ENCODE measurements at regions of chr1 and their contacts with region 1.

Region 1: GRCh38 chr1:21232044-21232443 is 55.3 kb upstream of the EIF4G3 start:
- DNase-seq: peak; percentile 74
- ATAC-seq: peak; percentile 70
- H3K4me3 ChIP-seq: no peak overlapping the region
- H3K27ac ChIP-seq: peak overlapping the region; percentile 59
- H3K4me1 ChIP-seq: peaks cover 39% of the 10 kb centered on the region
- H3K27me3 ChIP-seq: no peaks in the 10 kb centered on the region
- CTCF ChIP-seq: peak; percentile 88

Region 2: GRCh38 chr1:21255278-21255942 is 23.4 kb after region 1 on chr1:
- CTCF ChIA-PET with region 1: interaction called, 6 read pairs
- POLR2A ChIA-PET with region 1: no interaction called
- intact Hi-C with region 1: loop called (anchors 1 kb)
- DNase-seq: peak; percentile 92
- ATAC-seq: peak; percentile 60
- H3K4me3 ChIP-seq: no peak overlapping the region
- H3K27ac ChIP-seq: no peak overlapping the region
- H3K4me1 ChIP-seq: peaks cover 21% of the 10 kb centered on the region
- H3K27me3 ChIP-seq: no peaks in the 10 kb centered on the region
- CTCF ChIP-seq: peak; percentile 89

Region 3: DNA sequence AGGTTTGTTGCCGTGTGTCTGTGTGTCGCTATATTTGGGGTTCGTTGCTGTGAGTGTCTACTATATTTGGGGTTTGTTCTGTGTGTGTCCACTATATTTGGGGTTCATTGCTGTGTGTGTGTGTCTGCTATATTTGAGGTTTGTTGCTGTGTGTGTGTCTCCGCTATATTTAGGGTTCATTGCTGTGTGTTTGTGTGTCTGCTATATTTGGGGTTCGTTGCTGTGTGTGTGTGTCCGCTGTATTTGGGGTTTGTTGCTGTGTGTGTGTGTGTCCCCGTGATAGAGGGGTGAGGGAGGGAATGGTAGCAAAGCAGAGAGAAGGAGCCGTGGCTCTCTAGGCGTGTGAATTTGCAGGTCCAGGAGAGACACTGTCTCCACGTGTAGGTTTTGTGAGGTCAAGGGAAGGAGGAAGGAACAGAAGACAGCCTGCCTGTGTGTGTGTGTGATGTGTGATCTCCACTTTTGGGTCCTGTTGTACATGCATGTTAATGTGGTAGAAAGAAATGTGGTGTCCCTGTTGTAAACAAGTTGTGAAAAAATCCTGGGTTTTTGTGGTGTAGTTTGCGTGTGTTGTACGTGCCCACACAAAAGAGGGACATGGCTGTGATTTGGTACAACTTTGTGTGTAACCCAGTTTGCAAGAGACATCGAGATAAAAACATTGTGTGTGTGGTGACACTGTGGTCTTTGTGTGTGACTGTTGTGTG is 114.5 kb after region 1 on chr1:
- CTCF ChIA-PET with region 1: no interaction called
- POLR2A ChIA-PET with region 1: no interaction called
- intact Hi-C with region 1: loop called (anchors 1 kb)
- DNase-seq: no peak
- ATAC-seq: no peak
- H3K4me3 ChIP-seq: peak overlapping the region; percentile 96
- H3K27ac ChIP-seq: no peak overlapping the region
- H3K4me1 ChIP-seq: peaks cover 31% of the 10 kb centered on the region
- H3K27me3 ChIP-seq: no peaks in the 10 kb centered on the region
- CTCF ChIP-seq: no peak

Region 4: GRCh38 chr1:21490774-21491553 is 258.9 kb after region 1 on chr1:
- CTCF ChIA-PET with region 1: no interaction called
- POLR2A ChIA-PET with region 1: no interaction called
- intact Hi-C with region 1: loop called (anchors 10 kb)
- DNase-seq: peak; percentile 78
- ATAC-seq: peak; percentile 87
- H3K4me3 ChIP-seq: no peak overlapping the region
- H3K27ac ChIP-seq: no peak overlapping the region
- H3K4me1 ChIP-seq: no peaks in the 10 kb centered on the region
- H3K27me3 ChIP-seq: no peaks in the 10 kb centered on the region
- CTCF ChIP-seq: peak; percentile 82

Region 5: DNA sequence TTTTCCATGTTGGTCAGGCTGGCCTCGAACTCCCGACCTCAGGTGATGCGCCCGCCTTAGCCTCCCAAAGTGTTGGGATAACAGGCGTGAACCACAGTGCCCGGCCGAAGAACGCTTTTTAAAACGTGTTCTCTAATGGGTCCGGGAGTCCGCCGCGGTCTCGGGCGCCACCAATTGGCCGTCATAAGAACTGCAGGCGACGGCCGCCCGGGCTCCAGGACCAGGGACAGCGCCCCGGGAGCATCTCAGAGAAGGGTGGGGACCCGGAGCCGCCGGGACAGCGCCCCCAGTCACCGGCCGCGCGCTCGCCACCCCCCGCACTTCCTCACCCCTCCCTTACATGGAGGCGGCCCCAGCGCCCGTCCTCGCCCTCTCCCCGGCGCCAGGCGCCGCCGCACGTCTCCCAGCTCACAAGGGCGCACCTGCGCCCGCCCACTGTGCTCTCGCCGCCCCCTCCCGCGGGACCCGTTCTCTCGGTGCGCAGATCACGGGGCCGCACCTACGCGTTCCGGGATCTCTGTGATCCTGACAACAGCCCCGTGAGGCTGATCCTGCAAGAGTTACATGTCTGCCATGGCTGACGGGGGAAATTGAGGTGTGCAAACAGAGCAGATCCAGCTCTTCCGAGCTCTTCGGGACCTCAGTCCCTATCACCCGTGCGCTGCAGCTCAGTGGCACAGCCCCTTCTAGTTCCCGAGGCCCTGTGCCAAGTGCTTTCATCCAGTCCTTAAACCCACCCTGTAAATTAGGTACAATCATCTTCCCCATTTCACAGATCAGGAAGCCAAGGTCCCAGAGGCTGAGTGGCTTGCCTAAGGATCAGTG is 427.3 kb after region 1 on chr1:
- CTCF ChIA-PET with region 1: no interaction called
- POLR2A ChIA-PET with region 1: no interaction called
- intact Hi-C with region 1: loop called (anchors 5 kb)
- DNase-seq: peak; percentile 69
- ATAC-seq: peak; percentile 74
- H3K4me3 ChIP-seq: peak overlapping the region; percentile 47; the same call in 1 of the 2 replicates
- H3K27ac ChIP-seq: no peak overlapping the region
- H3K4me1 ChIP-seq: 0 out of 2 replicates have a peak, but pooled peaks cover 3% of the 10 kb centered on the region
- H3K27me3 ChIP-seq: 0 out of 2 replicates have a peak, but pooled peaks cover 6% of the 10 kb centered on the region
- CTCF ChIP-seq: peak; percentile 75

Measured in PC-3 (cell line).